ENCODE measurements at regions of chrX and their contacts with region 1.

Region 1: GRCh38 chrX:136268051-136269048 is 17.1 kb upstream of the MAP7D3 start:
- DNase-seq: peak in 8 of 9 experiments; percentile 5 to 68 (median 46)
- ATAC-seq: peak; percentile 48
- H3K4me3 ChIP-seq: no peak overlapping the region
- H3K4me3 Mint-ChIP-seq: no peak overlapping the region
- H3K27ac ChIP-seq: no peak overlapping the region
- H3K27ac Mint-ChIP-seq: no peak overlapping the region
- H3K4me1 ChIP-seq: no peaks in the 10 kb centered on the region
- H3K4me1 Mint-ChIP-seq: peaks cover 5% of the 10 kb centered on the region
- H3K27me3 ChIP-seq: no peaks in the 10 kb centered on the region
- H3K27me3 Mint-ChIP-seq: no peaks in the 10 kb centered on the region
- CTCF ChIP-seq: peak; percentile 76

Region 2: DNA sequence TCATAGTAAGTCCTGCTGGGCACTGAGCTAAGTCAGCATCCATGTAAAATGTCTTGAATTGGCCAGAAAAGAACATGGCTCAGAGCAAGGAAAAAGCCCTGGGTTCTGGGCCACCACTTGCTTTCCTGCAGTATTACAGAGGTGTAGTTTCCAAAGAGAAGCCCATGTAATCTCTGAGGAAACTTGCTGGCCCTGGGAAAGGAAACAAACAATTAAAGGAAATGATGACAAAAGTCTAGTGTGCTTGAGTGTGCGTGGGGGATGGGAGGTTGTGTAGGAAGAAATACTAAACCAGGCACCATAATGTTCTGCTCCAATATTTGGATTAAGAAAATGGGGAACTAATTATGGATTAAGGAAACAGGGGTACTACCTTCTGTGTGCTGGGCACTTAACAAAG is 886.1 kb before region 1 on chrX:
- CTCF ChIA-PET with region 1: no interaction called
- POLR2A ChIA-PET with region 1: no interaction called
- intact Hi-C with region 1: no loop called
- DNase-seq: no peak
- ATAC-seq: no peak
- H3K4me3 ChIP-seq: no peak overlapping the region
- H3K4me3 Mint-ChIP-seq: no peak overlapping the region
- H3K27ac ChIP-seq: no peak overlapping the region
- H3K27ac Mint-ChIP-seq: no peak overlapping the region
- H3K4me1 ChIP-seq: peaks cover 35% of the 10 kb centered on the region
- H3K4me1 Mint-ChIP-seq: peaks cover 52% of the 10 kb centered on the region
- H3K27me3 ChIP-seq: no peaks in the 10 kb centered on the region
- H3K27me3 Mint-ChIP-seq: no peaks in the 10 kb centered on the region
- CTCF ChIP-seq: no peak

Region 3: DNA sequence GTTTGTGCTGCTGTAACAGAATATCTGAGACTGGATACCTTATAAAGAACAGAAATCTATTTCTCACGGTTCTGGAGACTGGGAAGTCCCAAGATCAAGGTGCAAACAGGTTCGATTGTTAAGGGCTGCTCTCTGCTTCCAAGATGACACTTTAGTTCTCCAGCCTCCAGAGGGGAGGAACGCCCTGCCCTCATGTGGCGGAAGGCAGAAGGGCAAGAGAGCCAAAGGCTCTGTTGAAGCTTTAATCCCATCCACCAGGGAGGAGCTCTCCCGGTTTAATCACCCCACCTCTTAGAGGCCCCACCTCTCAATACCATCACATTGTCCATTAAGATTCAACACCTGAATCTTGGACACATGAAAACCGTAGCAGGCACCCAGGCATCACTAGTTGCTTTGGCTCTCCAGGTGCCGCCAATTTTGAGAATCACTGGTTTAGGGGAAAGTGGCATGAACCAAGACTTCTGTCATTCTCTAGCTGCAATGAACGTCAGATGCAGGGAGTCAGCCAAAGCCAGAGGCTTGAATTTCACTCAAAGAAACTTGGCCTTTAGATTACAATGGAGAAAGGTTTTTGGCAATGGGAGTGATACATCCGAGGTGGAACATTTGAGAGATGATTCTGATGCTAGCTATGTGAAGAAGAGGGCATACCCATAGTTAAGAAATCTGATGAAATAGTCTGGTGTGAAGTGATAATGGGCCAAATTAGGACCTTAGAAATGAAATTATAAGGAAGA is 105.3 kb before region 1 on chrX:
- CTCF ChIA-PET with region 1: no interaction called
- POLR2A ChIA-PET with region 1: no interaction called
- intact Hi-C with region 1: loop called in 1 of 2 experiments (anchors 5 kb)
- DNase-seq: peak in 6 of 9 experiments; percentile 33 to 56 (median 39)
- ATAC-seq: peak; percentile 67
- H3K4me3 ChIP-seq: no peak overlapping the region
- H3K4me3 Mint-ChIP-seq: no peak overlapping the region
- H3K27ac ChIP-seq: no peak overlapping the region
- H3K27ac Mint-ChIP-seq: no peak overlapping the region
- H3K4me1 ChIP-seq: no peaks in the 10 kb centered on the region
- H3K4me1 Mint-ChIP-seq: peaks cover 2% of the 10 kb centered on the region
- H3K27me3 ChIP-seq: no peaks in the 10 kb centered on the region
- H3K27me3 Mint-ChIP-seq: no peaks in the 10 kb centered on the region
- CTCF ChIP-seq: peak; percentile 46

Region 4: DNA sequence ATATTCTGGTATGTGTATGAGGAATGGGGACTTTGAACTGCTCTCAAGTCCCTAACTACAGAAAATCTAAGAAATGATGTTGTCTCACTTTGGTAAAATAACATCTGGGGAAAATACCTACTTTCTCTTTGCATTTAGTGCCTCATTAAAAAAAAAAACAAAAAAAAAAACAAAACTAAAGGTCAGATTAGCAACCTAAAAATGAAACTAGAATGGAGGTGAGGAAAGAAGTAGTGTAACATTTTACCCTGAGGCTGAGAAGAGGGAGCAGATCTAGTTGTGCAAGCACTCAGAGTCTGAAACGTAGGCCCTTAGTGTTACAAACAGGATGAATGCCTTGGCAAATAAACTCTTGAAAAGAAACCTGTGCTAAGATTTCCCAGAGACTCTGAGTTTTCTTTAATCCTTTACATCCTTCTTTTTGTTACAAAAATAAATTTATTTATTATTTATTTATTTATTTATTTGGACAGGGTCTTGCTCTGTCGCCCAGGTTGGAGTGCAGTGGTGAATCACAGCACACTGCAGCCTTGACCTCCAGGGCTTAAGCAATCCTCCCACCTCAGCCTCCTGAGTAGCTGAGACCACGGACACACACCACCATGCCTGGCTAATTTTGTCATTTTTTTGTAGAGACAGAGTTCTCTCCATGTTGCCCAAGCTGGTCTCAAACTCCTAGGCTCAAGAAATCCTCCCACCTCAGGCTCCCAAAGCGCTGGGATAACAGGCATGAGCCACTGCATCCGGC is 319.9 kb after region 1 on chrX:
- CTCF ChIA-PET with region 1: no interaction called
- POLR2A ChIA-PET with region 1: no interaction called
- intact Hi-C with region 1: loop called in 1 of 2 experiments (anchors 10 kb)
- DNase-seq: peak in 2 of 9 experiments; percentile 43 to 71
- ATAC-seq: peak; percentile 38
- H3K4me3 ChIP-seq: no peak overlapping the region
- H3K4me3 Mint-ChIP-seq: peak overlapping the region; percentile 42
- H3K27ac ChIP-seq: peak overlapping the region in 1 of 2 experiments; percentile 76
- H3K27ac Mint-ChIP-seq: peak overlapping the region; percentile 89
- H3K4me1 ChIP-seq: peaks cover 38% of the 10 kb centered on the region
- H3K4me1 Mint-ChIP-seq: peaks cover 48% of the 10 kb centered on the region
- H3K27me3 ChIP-seq: no peaks in the 10 kb centered on the region
- H3K27me3 Mint-ChIP-seq: no peaks in the 10 kb centered on the region
- CTCF ChIP-seq: no peak

Measured in CD8-positive, alpha-beta T cell (primary cell).